ENCODE measurements at regions of chr5 and their contacts with region 1.

Region 1: GRCh38 chr5:88889189-88890069 is 6.4 kb upstream of the MEF2C start:
- DNase-seq: peak; percentile 77
- ATAC-seq: peak; percentile 82

Region 2: DNA sequence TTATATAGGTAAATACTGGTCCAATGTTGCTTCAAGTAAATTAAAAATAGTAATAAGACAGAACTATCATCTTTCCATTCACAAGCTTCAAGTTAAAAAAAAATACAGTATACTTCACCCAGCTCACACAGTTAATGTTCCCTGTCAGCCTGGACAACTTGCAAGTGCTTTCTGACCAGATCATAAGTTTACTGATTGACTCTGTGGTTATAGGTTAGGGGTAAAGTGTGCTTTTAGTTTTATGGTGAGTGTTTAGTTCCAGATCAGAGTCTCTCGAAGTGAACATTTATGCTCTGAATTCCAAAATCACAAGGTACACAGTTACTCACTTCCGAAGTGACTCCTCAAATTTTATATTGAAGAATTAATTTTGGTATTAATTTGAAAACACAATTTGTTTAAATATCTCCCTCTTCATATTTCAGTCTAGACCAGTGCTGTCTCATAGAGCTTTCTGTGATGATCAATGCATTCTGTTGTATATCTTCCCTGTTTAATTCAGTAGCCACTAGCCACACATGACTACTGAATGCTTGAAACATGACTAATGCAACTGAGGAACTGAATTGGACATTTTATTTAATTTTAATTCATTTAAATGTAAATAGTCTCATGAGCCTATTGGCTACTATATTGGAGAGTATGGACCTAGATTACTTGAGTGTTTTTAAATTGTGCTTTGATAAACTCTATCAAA is 97.1 kb before region 1 on chr5:
- intact Hi-C with region 1: no loop called
- DNase-seq: no peak
- ATAC-seq: no peak

Region 3: GRCh38 chr5:88833371-88834130 is 55.9 kb before region 1 on chr5:
- intact Hi-C with region 1: no loop called
- DNase-seq: no peak
- ATAC-seq: peak; percentile 62

Region 4: GRCh38 chr5:89043676-89044075 is 154.2 kb after region 1 on chr5:
- intact Hi-C with region 1: loop called (anchors 5 kb)
- DNase-seq: no peak
- ATAC-seq: no peak

Region 5: GRCh38 chr5:89110916-89111646 is 221.7 kb after region 1 on chr5:
- intact Hi-C with region 1: no loop called
- DNase-seq: no peak
- ATAC-seq: no peak